Left cardiac atrium (tissue), 4 donors: ENCODE measurements at regions of chr15 and their contacts with region 1.

Region 1: GRCh38 chr15:75684642-75685041 is 28.0 kb downstream of the CSPG4 start:
- DNase-seq: no peak
- ATAC-seq: no peak

Region 2: DNA sequence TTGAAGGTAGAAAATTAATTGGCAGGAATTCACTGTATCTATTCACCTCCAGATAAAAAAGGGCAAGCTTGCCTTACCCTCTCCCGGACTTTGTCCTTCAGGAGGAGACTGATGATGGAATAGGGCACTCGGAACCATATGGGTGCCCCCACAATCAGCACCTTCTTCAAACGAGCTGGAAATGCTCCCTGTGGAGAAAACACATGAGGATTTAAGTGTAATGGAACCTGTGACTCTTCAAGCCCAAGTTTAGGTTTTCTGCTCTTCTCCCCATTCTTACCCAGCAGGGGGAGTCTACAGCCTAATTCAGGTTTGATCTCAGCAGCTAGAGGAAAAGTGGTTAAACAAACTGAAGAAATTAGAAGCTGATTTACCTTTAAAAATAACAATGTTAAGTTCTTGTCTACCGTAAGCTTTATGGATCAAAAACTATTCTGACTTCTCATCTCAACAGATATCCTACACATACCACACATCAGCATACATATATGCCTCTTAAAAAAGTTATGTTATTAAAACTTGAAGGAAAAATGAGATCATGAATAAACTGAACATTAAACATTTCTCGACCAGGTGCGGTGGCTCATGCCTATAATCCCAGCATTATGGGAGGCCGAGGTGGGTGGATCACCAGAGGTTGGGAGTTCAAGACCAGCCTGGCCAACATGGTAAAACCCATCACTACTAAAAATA is 175.7 kb before region 1 on chr15:
- intact Hi-C with region 1: loop called in 1 of 2 experiments (anchors 5 kb)
- DNase-seq: no peak
- ATAC-seq: peak in 1 of 2 donors; percentile 36

Region 3: GRCh38 chr15:75639709-75640482 is 44.7 kb before region 1 on chr15 and contains the start of gene IMP3:
- intact Hi-C with region 1: loop called in 1 of 2 experiments (anchors 5 kb)
- DNase-seq: peak; percentile 96
- ATAC-seq: peak; percentile 97 to 98
- total RNA-seq, gene IMP3: 44.1 to 49.9 TPM

Region 4: DNA sequence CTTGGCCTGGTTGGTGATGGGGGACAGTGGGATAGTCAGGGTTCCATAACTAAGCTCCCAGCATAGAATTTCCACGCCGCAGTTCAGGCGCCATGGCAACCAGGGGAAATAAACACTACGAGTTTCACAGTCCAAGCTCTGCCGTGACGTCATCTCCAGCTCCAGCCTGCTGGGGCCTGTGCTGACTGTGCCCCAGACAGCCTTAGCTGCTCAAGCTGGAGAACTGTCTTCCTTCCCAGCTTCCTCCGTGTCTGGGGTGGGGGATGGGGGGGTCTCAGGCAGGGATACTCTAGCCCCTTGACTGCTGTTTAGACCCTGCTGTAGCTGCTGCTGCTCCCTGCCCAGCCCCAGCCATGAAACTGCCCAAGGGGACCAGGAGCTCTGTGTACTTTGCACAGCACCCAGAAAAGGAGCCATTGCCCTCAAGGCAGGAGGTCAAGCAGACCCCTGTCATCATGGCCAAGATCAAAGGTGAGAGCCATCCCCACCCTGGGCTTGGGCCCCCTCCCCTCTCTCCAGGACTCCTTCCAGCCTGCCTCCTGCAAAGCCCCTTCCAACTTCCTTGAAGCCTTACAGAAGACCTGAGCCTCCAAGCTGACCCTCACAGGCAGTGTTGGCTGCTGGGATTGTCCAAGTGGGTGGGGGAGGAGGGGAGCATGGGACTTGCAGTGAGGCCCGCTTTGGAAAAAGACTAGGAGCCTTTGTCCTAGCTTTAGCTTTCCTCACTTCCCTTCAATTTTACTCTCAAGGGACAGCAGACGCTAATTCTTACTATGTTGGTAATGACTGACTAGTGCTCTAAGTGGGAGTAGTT is 39.4 kb after region 1 on chr15:
- intact Hi-C with region 1: loop called in 1 of 2 experiments (anchors 5 kb)
- DNase-seq: peak; percentile 96
- ATAC-seq: peak; percentile 90 to 93

Region 5: DNA sequence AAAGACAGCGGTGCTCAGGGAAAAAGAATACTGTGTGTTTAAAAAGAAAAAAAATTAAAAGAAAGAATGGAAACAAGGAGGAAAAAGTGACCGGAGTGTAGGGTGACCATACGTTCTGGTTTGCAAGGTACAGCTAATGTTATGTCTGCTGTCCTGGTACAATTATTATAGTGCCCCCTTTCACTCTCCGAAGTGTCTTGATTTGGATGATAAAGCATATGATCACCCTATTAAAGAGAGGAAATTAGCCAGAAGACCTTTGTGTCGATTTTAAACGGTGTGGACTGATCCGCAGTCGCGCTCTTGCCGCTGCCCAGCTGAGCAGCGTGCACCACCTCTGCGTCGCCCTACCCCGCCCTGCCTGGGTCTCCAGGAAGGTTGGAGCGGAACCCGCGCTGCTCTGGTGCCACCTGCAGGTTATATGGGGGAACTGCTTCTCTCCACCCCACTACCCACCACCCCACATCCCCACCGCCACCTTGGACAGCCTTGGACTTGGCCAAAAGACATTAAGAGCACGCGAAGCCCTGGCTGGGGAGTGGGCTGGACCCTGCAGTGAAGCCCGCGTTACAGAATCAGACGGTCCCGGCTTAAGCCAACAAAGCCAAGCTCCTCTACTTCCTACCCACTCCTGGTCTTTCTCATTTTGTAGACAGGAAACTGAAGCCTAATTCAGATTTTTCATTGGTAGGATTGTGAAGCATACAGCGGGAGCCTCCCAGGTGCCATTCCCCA is 117.4 kb after region 1 on chr15:
- intact Hi-C with region 1: loop called in 1 of 2 experiments (anchors 5 kb)
- DNase-seq: peak; percentile 84
- ATAC-seq: peak; percentile 99

Region 6: GRCh38 chr15:75928680-75929608 is 244.3 kb after region 1 on chr15:
- intact Hi-C with region 1: no loop called
- DNase-seq: no peak
- ATAC-seq: no peak